Sigmoid colon (tissue), 7 donors: ENCODE measurements at regions of chr19 and their contacts with region 1.

Region 1: GRCh38 chr19:45523642-45524256 is 16.5 kb downstream of the VASP start:
- DNase-seq: peak; percentile 92
- H3K4me3 ChIP-seq: no peak overlapping the region
- H3K27ac ChIP-seq: peak overlapping the region; percentile 30 to 54 (median 47)
- H3K4me1 ChIP-seq: peaks cover 0 to 13% (median 11%) of the 10 kb centered on the region in 4 donors
- H3K27me3 ChIP-seq: no peaks in the 10 kb centered on the region
- CTCF ChIP-seq: peak; percentile 83 to 96 (median 92)
- EP300 ChIP-seq: no peak
- POLR2A ChIP-seq: no peak

Region 2: GRCh38 chr19:45444311-45445041 is 79.3 kb before region 1 on chr19:
- intact Hi-C with region 1: no loop called
- DNase-seq: peak; percentile 97
- H3K4me3 ChIP-seq: peak overlapping the region; percentile 27 to 54 (median 46)
- H3K27ac ChIP-seq: peak overlapping the region; percentile 91 to 95 (median 94)
- H3K4me1 ChIP-seq: peaks cover 0 to 46% (median 40%) of the 10 kb centered on the region in 4 donors
- H3K27me3 ChIP-seq: no peaks in the 10 kb centered on the region
- CTCF ChIP-seq: no peak
- EP300 ChIP-seq: peak in 2 of 4 donors; percentile 40 to 62
- POLR2A ChIP-seq: no peak

Region 3: GRCh38 chr19:45558399-45558878 is 34.7 kb after region 1 on chr19:
- intact Hi-C with region 1: loop called (anchors 5 kb)
- DNase-seq: no peak
- H3K4me3 ChIP-seq: no peak overlapping the region
- H3K27ac ChIP-seq: no peak overlapping the region
- H3K4me1 ChIP-seq: peaks cover 0 to 6% (median 0%) of the 10 kb centered on the region in 4 donors
- H3K27me3 ChIP-seq: no peaks in the 10 kb centered on the region
- CTCF ChIP-seq: peak; percentile 11 to 37 (median 27)
- EP300 ChIP-seq: no peak
- POLR2A ChIP-seq: no peak

Region 4: DNA sequence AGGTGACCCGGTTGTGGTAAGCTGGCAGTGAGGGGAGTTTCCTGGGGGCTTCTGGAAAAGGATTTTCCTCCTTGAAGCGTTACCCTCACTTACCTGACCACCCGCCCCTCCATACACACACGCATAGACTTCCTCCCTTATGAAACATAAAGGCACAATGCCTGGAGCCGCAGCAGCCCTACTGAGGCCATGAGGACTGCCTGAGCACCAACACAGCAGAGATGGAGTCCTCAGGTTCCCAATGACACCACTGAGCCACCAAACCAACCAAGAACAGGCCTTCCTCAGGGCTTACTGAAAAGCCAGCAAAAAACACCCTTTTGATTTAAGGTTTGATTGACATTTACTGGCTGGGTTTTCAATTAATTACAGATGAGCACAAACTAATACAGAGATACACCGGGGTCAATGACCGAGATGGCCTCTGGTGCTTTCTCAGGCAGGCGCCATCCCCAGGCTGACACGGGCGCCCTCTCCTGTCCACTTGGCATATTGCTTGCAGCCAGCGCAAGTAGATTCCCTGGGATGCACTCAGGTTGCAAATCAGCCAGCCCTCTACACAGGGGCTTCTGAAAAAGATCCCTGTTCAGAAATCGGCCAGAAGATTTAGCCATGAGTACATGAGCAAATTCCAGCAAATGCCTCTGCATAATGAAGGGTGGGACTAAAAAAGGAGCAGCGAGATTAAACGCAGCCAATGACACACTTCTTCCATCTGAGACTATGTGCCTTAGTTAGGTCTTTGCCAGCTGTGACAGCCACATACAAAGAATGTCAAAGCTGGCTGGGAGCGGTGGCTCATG is 46.1 kb after region 1 on chr19:
- intact Hi-C with region 1: loop called (anchors 5 kb)
- DNase-seq: no peak
- H3K4me3 ChIP-seq: no peak overlapping the region
- H3K27ac ChIP-seq: no peak overlapping the region
- H3K4me1 ChIP-seq: peaks cover 0 to 6% (median 0%) of the 10 kb centered on the region in 4 donors
- H3K27me3 ChIP-seq: no peaks in the 10 kb centered on the region
- CTCF ChIP-seq: peak; percentile 28 to 58 (median 56)
- EP300 ChIP-seq: no peak
- POLR2A ChIP-seq: no peak

Region 5: GRCh38 chr19:45581576-45581975 is 57.8 kb after region 1 on chr19:
- intact Hi-C with region 1: no loop called
- DNase-seq: no peak
- H3K4me3 ChIP-seq: no peak overlapping the region
- H3K27ac ChIP-seq: no peak overlapping the region
- H3K4me1 ChIP-seq: peaks cover 0 to 38% (median 26%) of the 10 kb centered on the region in 4 donors
- H3K27me3 ChIP-seq: no peaks in the 10 kb centered on the region
- CTCF ChIP-seq: no peak
- EP300 ChIP-seq: no peak
- POLR2A ChIP-seq: no peak